CD8-positive, alpha-beta T cell (primary cell): ENCODE measurements at regions of chr1 and their contacts with region 1.

Region 1: GRCh38 chr1:32221980-32222755 is at the starts of genes EIF3I and TMEM234:
- DNase-seq: peak; percentile 75 to 96 (median 91)
- ATAC-seq: peak; percentile 85
- H3K4me3 ChIP-seq: peak within 1 kb of the TSS; percentile 96 to 99
- H3K4me3 Mint-ChIP-seq: peak within 1 kb of the TSS; percentile 97
- H3K27ac ChIP-seq: peak within 1 kb of the TSS; percentile 99 to 100
- H3K27ac Mint-ChIP-seq: peak within 1 kb of the TSS; percentile 99
- H3K4me1 ChIP-seq: peaks cover 30% of the 10 kb centered on the region
- H3K4me1 Mint-ChIP-seq: peaks cover 49% of the 10 kb centered on the region
- H3K27me3 ChIP-seq: no peaks in the 10 kb centered on the region
- H3K27me3 Mint-ChIP-seq: no peaks in the 10 kb centered on the region
- CTCF ChIP-seq: no peak
- total RNA-seq, gene EIF3I: 97.4 to 101 TPM
- total RNA-seq, gene TMEM234: 8.6 to 9.1 TPM

Region 2: GRCh38 chr1:30450818-30451233 is 1771.3 kb before region 1 on chr1:
- CTCF ChIA-PET with region 1: no interaction called
- POLR2A ChIA-PET with region 1: no interaction called
- intact Hi-C with region 1: no loop called
- DNase-seq: no peak
- ATAC-seq: no peak
- H3K4me3 ChIP-seq: no peak overlapping the region
- H3K4me3 Mint-ChIP-seq: no peak overlapping the region
- H3K27ac ChIP-seq: no peak overlapping the region
- H3K27ac Mint-ChIP-seq: no peak overlapping the region
- H3K4me1 ChIP-seq: no peaks in the 10 kb centered on the region
- H3K4me1 Mint-ChIP-seq: no peaks in the 10 kb centered on the region
- H3K27me3 ChIP-seq: no peaks in the 10 kb centered on the region
- H3K27me3 Mint-ChIP-seq: peaks cover 25% of the 10 kb centered on the region
- CTCF ChIP-seq: no peak

Region 3: DNA sequence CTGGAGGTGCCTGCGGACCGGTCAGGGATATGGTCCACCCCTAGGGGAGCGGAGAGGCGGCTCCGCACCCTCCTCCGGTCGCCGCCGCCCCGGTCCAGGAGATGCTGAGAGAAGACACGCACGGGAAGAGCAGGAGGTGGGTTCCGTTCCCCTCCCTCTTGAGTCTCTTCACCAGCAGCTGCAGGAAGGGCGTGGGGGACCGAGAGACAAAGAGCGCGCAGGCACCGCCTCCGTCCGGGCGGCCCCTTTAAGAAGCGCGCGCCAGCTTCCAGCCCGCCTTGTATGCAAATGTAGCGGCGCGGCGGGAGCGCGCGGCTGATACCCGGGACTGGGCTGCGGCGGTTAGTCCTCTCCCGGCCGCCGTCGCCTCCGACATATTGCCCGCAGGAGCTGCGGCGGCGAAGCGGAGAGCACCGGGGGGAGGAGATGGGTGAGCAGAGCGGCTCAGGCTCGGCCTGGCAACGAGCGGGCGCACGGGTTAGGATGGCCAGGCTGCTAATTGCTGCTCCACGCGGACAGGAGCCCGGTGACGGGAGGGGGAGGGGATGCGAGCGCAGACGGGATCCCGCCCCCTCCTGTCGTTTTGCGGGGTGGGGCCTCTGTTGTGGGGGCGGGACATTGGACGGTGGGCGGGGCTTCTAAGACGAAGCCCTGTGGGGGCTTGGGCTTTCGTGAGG is 149.4 kb before region 1 on chr1 and contains the start of gene TMEM39B:
- CTCF ChIA-PET with region 1: no interaction called
- POLR2A ChIA-PET with region 1: no interaction called
- intact Hi-C with region 1: loop called in 1 of 2 experiments (anchors 2 kb)
- DNase-seq: peak; percentile 85 to 97 (median 92)
- ATAC-seq: peak; percentile 86
- H3K4me3 ChIP-seq: peak within 1 kb of the TSS; percentile 75 to 99
- H3K4me3 Mint-ChIP-seq: peak within 1 kb of the TSS; percentile 82
- H3K27ac ChIP-seq: peak within 1 kb of the TSS; percentile 65 to 74
- H3K27ac Mint-ChIP-seq: peak within 1 kb of the TSS; percentile 86
- H3K4me1 ChIP-seq: peaks cover 18% of the 10 kb centered on the region
- H3K4me1 Mint-ChIP-seq: peaks cover 32% of the 10 kb centered on the region
- H3K27me3 ChIP-seq: no peaks in the 10 kb centered on the region
- H3K27me3 Mint-ChIP-seq: no peaks in the 10 kb centered on the region
- CTCF ChIP-seq: no peak
- total RNA-seq, gene TMEM39B: 6.6 to 7.6 TPM

Region 4: DNA sequence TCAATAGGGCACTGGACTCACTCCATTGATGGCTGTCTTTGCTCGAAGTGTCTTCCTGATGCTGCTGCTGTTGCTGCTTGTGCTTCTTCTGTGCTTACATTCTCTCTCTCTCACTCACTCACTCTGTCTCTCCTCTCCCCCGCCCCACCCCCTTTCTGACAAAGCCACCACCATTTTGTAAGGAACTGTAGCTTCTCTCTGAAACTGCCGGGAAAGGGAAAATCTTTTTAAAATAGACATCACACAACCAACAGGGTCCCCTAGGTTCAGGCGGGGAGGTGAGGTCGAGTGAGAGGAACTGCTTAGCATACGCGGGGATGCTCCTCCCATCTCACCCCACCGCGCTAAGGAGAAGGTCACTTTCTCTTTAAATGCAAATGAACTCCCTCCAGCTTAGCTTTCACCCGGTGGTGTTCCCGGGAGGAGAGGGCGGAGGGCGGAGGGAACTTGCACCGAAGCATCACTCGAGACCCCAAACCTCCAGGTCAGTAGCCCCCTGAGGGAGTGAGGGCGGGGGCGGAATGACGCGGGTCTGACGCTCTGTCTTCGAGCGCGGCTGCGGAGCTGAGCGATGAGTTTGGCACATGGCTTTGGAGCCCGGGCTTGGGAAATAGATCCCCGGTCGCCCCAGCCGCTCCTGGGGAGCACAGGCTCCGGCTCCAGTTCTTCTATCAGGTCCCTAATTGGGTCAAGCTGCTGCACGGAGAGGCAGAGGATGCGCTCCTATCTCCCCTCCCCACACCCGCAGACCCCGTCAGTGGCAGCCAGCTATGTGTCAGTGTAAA is 21.8 kb before region 1 on chr1 and contains the start of gene CCDC28B:
- CTCF ChIA-PET with region 1: no interaction called
- POLR2A ChIA-PET with region 1: interaction called, 4 read pairs
- intact Hi-C with region 1: loop called (anchors 1 kb)
- DNase-seq: peak in 8 of 9 experiments; percentile 32 to 81 (median 64)
- ATAC-seq: peak; percentile 49
- H3K4me3 ChIP-seq: peak within 1 kb of the TSS; percentile 69 to 70
- H3K4me3 Mint-ChIP-seq: peak within 1 kb of the TSS; percentile 85
- H3K27ac ChIP-seq: peak within 1 kb of the TSS; percentile 75 to 78
- H3K27ac Mint-ChIP-seq: peak within 1 kb of the TSS; percentile 97
- H3K4me1 ChIP-seq: peaks cover 46% of the 10 kb centered on the region
- H3K4me1 Mint-ChIP-seq: peaks cover 59% of the 10 kb centered on the region
- H3K27me3 ChIP-seq: no peaks in the 10 kb centered on the region
- H3K27me3 Mint-ChIP-seq: no peaks in the 10 kb centered on the region
- CTCF ChIP-seq: no peak
- total RNA-seq, gene CCDC28B: 3.8 to 5.2 TPM

Region 5: DNA sequence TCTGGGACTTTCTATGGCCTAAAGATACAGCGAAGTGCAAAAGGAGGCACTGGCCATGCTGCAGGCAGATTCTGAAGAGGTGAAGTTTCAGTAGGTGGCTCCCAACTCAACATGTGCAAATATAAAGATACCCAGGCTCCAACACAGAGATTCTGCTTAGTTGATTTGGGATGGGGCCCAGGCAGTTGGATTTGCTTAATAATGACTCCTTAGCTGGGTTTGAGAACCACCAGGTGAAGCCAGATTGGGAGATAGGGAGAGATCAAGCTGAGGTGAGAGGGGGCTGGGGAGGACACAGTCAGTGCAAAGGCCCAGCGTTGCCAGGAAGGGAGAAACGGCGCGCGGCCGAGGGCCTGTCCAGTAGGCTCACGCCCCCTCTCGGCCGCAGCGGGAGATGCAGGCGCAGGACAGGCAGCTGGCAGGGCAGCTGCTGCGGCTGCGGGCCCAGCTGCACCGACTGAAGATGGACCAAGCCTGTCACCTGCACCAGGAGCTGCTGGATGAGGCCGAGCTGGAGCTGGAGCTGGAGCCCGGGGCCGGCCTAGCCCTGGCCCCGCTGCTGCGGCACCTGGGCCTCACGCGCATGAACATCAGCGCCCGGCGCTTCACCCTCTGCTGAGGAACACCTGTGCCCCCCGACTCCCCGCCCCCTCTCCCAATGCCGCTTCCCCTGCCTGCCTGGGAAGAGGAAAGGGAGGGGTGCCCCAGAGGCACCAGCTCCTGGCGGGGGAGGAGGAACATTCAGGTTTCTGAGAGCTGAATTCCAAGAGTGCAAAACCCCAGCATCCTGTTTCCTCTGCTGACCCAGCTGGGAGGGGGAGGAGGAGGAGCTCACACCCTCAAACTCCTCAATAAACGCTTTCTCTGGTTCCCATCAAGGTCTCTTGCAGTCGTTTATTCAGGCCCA is 26.1 kb after region 1 on chr1:
- CTCF ChIA-PET with region 1: interaction called, 33 read pairs
- POLR2A ChIA-PET with region 1: interaction called, 6 read pairs
- intact Hi-C with region 1: loop called (anchors 1 kb)
- DNase-seq: peak; percentile 51 to 84 (median 76)
- ATAC-seq: peak; percentile 5
- H3K4me3 ChIP-seq: peak overlapping the region; percentile 21 to 28
- H3K4me3 Mint-ChIP-seq: peak overlapping the region; percentile 66
- H3K27ac ChIP-seq: peak overlapping the region; percentile 40 to 93
- H3K27ac Mint-ChIP-seq: peak overlapping the region; percentile 99
- H3K4me1 ChIP-seq: peaks cover 42% of the 10 kb centered on the region
- H3K4me1 Mint-ChIP-seq: peaks cover 44% of the 10 kb centered on the region
- H3K27me3 ChIP-seq: no peaks in the 10 kb centered on the region
- H3K27me3 Mint-ChIP-seq: no peaks in the 10 kb centered on the region
- CTCF ChIP-seq: peak; percentile 86

Region 6: DNA sequence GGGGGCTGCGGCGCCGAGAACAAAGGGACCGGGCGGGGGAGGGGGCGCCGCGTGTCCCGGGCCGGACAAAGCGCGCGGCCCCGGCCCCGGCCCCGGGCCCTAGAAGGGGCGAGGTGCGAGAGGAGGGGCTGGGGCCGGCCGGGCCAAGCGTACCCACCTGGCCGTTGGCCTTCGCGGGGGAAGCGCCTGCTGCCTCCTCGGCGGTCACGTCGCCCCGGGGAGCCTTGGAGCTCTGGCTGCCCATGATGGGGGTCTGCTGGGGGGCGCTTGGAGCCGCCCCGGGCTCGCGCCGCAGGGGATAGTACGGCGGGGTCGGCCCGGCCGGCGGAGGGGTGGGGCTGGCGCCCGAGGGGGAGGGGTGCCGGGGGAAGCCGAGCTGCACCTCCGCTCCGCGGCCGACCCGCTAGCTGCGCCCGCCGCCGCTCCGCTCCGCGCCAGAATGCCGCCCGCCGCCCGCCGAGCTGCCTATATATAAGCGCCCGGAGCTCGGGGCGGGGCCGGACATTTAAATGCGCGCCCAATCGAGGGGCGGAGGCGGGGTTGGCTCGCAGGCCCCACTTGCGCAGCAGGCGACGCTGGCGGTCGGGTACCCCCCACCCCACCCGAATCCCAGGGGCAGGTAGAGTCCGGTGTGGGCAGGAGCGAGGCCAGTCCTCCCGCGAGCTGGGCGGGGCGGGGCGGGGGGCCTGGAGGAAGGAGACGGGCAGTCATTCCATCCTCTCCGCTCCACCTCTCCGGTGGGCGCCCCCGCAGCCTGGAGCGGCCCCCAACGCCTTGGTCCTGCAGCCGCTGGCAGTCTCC is 113.8 kb after region 1 on chr1 and contains the start of gene MARCKSL1:
- CTCF ChIA-PET with region 1: no interaction called
- POLR2A ChIA-PET with region 1: interaction called, 4 read pairs
- intact Hi-C with region 1: loop called in 1 of 2 experiments (anchors 5 kb)
- DNase-seq: peak; percentile 75 to 94 (median 86)
- ATAC-seq: peak; percentile 70
- H3K4me3 ChIP-seq: peak within 1 kb of the TSS; percentile 45 to 50
- H3K4me3 Mint-ChIP-seq: peak within 1 kb of the TSS; percentile 83
- H3K27ac ChIP-seq: peak within 1 kb of the TSS in 1 of 2 experiments; percentile 22
- H3K27ac Mint-ChIP-seq: peak within 1 kb of the TSS; percentile 77
- H3K4me1 ChIP-seq: peaks cover 27% of the 10 kb centered on the region
- H3K4me1 Mint-ChIP-seq: peaks cover 35% of the 10 kb centered on the region
- H3K27me3 ChIP-seq: no peaks in the 10 kb centered on the region
- H3K27me3 Mint-ChIP-seq: no peaks in the 10 kb centered on the region
- CTCF ChIP-seq: no peak
- total RNA-seq, gene MARCKSL1: 30.5 to 30.7 TPM

Region 7: DNA sequence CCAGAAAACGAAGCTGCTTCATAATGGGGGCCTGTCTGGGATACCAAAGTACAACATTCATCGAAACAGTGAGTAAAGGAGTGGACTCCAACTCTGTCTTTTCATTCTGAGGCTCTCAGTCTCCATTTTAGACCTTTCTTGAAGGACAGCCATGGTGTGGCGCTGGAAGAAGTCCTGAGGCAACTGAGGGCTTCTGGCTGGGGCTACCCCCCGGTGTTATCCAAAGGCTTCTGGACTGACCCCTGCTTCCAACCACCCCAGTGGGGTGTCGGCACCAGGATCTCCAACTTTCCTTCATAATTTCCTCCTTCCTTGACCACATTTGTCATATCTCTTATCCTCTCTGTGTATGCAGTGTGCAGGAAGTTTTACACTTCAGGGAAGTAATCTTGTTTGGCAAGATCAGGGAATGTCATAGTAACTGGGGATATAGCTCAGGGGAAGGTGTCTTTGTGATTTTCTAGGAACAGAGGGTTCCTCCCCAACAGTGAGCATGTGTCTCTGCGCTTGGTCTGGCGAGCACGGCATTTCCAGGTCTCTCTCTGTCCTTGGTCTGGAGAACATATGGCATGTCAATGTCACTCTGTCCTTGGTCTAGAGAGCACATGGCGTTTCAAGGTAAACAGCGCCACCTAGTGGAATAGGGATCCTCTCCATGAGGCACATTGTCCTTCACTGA is 191.5 kb after region 1 on chr1:
- CTCF ChIA-PET with region 1: interaction called, 23 read pairs
- POLR2A ChIA-PET with region 1: interaction called, 4 read pairs
- intact Hi-C with region 1: loop called in 1 of 2 experiments (anchors 1 kb)
- DNase-seq: peak; percentile 32 to 88 (median 75)
- ATAC-seq: peak; percentile 80
- H3K4me3 ChIP-seq: no peak overlapping the region
- H3K4me3 Mint-ChIP-seq: no peak overlapping the region
- H3K27ac ChIP-seq: no peak overlapping the region
- H3K27ac Mint-ChIP-seq: no peak overlapping the region
- H3K4me1 ChIP-seq: no peaks in the 10 kb centered on the region
- H3K4me1 Mint-ChIP-seq: peaks cover 3% of the 10 kb centered on the region
- H3K27me3 ChIP-seq: no peaks in the 10 kb centered on the region
- H3K27me3 Mint-ChIP-seq: peaks cover 10% of the 10 kb centered on the region
- CTCF ChIP-seq: peak; percentile 89